Right cardiac atrium (tissue), 5 donors: ENCODE measurements at regions of chr15 and their contacts with region 1.

Region 1: DNA sequence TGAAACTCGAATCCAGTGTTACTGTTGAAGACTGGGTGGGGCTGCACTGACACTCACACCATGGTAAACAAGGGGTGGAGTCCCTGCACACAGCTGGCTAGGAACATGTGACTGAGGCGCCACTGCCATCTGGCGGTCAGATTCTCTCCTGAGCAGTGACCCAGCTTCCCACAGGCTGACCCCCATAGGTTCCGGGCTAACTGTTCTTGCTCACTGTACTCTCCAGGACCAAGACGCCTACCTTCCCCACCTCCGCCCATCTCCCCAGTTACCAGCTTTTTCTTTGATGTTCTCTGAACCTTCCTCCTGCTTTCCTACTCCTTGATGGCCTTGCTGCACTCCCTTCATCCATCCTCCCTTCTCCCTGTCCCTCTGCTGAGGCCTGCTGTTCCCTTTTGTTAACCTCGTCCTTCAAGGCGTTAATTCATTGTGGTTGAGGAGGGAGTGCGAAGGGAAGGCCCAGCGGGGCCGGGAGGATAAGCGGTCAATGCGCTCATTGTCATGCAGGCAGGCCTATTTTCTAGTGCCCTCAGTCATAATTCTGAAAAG is 115.2 kb downstream of the ATP8B4 start:
- DNase-seq: peak; percentile 88 to 97 (median 93)
- ATAC-seq: peak; percentile 99
- H3K4me3 ChIP-seq: no peak overlapping the region
- H3K27ac ChIP-seq: no peak overlapping the region
- H3K4me1 ChIP-seq: no peaks in the 10 kb centered on the region
- H3K27me3 ChIP-seq: no peaks in the 10 kb centered on the region

Region 2: DNA sequence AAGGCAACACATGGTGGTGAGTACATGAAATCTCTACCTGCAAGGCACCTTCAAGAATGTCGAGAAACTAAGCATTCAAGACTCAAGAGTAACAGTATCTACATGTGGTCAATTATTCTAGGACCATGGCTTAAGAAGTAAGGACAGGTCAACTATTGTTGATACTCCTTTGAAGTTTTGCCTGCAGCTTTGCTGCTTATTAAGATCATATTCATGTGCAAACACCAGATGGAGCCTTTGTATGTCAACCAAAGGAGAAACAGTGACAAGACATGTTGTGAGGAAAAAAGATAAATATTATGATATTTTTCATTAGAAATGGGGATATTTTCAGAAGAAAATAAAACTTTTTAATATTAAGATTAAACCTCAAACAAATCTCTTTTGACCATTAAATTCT is 633.1 kb before region 1 on chr15:
- intact Hi-C with region 1: loop called in 1 of 4 experiments (anchors 5 kb)
- DNase-seq: no peak
- ATAC-seq: no peak
- H3K4me3 ChIP-seq: no peak overlapping the region
- H3K27ac ChIP-seq: no peak overlapping the region
- H3K4me1 ChIP-seq: no peaks in the 10 kb centered on the region
- H3K27me3 ChIP-seq: no peaks in the 10 kb centered on the region

Region 3: GRCh38 chr15:49468440-49468839 is 535.4 kb before region 1 on chr15:
- intact Hi-C with region 1: loop called in 1 of 4 experiments (anchors 10 kb)
- DNase-seq: no peak
- ATAC-seq: peak; percentile 38 to 48
- H3K4me3 ChIP-seq: no peak overlapping the region
- H3K27ac ChIP-seq: no peak overlapping the region
- H3K4me1 ChIP-seq: peaks cover 2% of the 10 kb centered on the region
- H3K27me3 ChIP-seq: no peaks in the 10 kb centered on the region

Region 4: DNA sequence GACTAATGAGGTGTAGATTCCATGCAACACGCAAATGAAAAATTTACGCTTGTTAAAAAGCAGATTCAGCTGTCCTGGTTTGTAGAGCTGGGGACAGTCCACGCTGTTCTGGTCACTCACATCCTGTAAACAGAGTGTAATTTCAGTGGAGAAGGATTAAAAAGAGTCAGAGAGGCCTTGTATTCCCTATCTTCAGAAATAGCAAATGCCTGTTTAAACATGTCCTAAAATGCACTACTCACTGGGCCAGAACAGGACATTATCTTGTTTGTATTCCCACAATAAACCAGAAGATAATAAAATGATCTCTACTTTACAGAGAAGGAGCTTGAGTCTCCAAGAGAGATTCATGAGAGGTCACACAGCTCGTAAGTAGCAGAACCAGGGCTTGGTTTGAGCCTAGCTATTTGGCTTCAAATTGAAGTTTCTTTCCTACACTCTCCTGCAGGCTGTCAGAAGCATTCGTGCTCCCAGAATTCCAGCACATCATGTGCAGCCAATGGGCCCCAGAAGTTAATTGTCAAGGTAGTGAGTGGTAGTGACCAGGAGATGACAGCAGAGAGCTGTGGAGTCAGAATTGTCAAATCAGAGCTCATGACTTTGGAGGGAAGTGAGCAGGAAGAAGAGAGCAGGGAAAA is 127.3 kb before region 1 on chr15:
- intact Hi-C with region 1: loop called in 3 of 4 experiments (anchors 5 to 10 kb)
- DNase-seq: peak; percentile 33 to 72 (median 60)
- ATAC-seq: peak; percentile 74 to 90
- H3K4me3 ChIP-seq: no peak overlapping the region
- H3K27ac ChIP-seq: peak overlapping the region; percentile 83
- H3K4me1 ChIP-seq: peaks cover 5% of the 10 kb centered on the region
- H3K27me3 ChIP-seq: no peaks in the 10 kb centered on the region